ENCODE measurements at regions of chr17 and their contacts with region 1.

Region 1: GRCh38 chr17:1399679-1400512 is at the start of gene YWHAE:
- DNase-seq: peak; percentile 93 to 97 (median 95)
- H3K4me3 ChIP-seq: peak within 1 kb of the TSS; percentile 62 to 92 (median 80)
- H3K27ac ChIP-seq: peak within 1 kb of the TSS; percentile 80 to 99 (median 98)
- H3K27me3 ChIP-seq: no peaks in the 10 kb centered on the region
- CTCF ChIP-seq: peak in 16 of 56 donors; percentile 7 to 52 (median 18)
- total RNA-seq, gene YWHAE: 537 to 1,262 (median 829) TPM

Region 2: DNA sequence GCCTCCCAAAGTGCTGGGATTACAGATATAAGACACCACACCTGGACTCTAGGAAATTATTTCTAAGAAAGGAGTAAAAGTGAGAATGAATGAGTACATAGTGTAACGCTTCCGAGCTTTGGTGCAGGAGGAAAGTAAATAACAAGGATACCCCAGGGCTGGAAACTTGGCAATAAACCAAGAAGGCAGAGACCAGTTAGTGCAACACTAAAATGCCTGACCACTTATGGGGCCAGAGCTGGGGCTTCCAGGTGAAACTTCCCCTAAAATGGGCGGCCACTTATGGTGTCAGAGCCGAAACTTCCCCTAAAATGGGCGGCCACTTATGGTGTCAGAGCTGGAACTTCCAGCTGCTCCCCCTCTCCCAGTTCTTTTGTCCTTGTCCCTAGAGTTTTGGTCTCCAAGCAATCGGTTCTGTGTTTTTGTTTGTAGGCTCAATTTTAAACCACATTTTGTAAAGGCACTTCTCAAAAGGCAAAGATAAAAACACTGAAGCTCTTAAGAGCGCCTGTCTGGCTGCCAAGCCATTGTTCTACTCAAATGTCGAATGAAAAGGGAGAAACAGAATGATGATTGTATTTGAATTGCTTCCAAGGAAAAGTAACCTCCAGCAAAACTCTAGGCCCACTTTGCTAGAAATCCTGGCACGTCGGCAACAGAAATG is 484.2 kb before region 1 on chr17:
- intact Hi-C with region 1: no loop called
- DNase-seq: no peak
- H3K4me3 ChIP-seq: no peak overlapping the region
- H3K27ac ChIP-seq: peak overlapping the region in 26 of 59 donors; percentile 2 to 75 (median 34)
- H3K27me3 ChIP-seq: no peaks in the 10 kb centered on the region
- CTCF ChIP-seq: no peak

Region 3: DNA sequence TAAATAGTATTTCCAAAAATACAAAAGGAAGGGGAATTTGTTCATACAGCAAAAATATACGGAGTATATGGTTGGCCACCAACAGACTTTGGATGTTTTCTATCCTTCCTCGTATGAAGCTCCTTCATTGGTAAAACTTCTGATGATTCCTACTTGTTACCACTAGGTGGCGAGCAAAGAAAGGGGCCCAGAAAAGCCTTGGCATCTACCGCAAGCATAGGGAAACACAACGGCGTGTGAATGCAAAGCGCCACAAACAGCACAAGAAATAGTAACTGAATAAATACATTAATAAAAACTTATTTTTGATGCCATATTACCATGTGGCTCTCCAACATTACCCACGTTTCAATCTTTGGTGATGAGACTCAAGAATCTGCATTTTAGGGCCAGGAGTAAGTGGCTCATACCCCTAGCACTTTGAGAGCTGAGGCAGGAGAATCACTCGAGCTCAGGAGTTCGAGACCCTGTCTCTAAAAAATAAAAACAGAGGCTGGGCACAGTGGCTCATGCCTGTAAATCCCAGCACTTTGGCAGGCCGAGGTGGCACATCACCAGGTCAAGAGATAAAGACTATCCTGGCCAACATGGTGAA is 34.4 kb before region 1 on chr17:
- intact Hi-C with region 1: loop called (anchors 2 to 5 kb)
- DNase-seq: peak in 6 of 10 donors; percentile 43 to 71 (median 51)
- H3K4me3 ChIP-seq: peak overlapping the region in 19 of 59 donors; percentile 0 to 38 (median 15)
- H3K27ac ChIP-seq: peak overlapping the region in 18 of 59 donors; percentile 1 to 57 (median 35)
- H3K27me3 ChIP-seq: no peaks in the 10 kb centered on the region
- CTCF ChIP-seq: peak; percentile 72 to 99 (median 89)

Region 4: DNA sequence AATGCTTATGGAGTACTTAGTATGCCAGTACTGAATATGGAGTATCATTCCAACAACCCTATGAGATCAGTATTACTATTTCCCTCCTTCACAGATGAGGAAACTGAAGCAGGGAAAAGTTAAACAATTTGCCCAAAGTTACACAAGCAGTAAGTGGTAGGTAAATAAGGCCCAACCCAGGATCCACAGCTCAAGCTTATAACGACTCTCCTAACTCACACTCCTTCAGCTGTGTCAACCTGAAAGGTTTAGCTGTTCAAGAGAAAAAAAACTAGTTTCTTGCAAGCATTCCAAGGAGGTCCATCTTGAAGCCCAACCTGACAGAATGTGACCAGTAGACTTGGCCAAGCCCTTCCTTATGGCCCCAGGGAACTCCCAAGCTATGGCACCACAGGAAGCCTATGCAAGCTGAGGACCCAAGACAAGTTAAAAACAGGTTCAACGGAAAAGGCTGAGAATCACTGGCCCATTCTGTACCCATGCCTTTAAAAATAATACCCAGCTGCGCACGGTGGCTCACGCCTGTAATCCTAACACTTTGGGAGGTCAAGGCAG is 49.6 kb after region 1 on chr17:
- intact Hi-C with region 1: no loop called
- DNase-seq: no peak
- H3K4me3 ChIP-seq: no peak overlapping the region
- H3K27ac ChIP-seq: no peak overlapping the region
- H3K27me3 ChIP-seq: no peaks in the 10 kb centered on the region
- CTCF ChIP-seq: no peak

Region 5: DNA sequence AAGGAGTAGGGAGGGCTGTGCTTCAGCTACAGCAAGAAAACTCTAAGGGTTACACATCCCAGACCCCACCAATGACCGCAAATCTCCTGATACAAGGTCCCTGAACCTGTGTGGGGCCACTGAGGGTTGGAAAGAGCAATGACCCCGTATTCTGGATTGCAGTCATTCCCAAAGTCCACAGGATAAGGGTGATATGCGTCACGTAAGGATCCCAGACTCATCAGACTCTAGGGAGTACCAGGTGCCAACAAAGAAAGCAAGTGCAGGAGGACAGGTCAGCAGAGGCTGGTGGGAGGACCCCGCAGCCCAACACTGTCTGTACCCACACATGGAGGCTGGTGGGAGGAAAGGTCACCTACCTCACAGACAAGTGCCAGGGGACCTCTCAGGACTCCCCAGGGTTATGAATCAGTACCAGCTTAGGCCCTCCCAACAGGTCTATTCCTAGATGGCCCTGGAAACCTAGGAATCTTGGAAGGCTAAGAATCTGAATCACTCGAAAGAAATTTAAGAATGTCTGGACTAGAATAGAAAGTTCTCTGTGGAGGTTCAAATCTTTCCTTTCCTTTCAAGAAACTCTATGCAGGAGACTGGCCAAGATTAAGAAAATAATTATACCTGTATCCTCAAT is 146.5 kb after region 1 on chr17:
- intact Hi-C with region 1: no loop called
- DNase-seq: no peak
- H3K4me3 ChIP-seq: no peak overlapping the region
- H3K27ac ChIP-seq: no peak overlapping the region
- H3K27me3 ChIP-seq: no peaks in the 10 kb centered on the region
- CTCF ChIP-seq: no peak

Measured in dorsolateral prefrontal cortex (tissue), 120 donors.